Psoas muscle (tissue), 8 donors: ENCODE measurements at regions of chr5 and their contacts with region 1.

Region 1: DNA sequence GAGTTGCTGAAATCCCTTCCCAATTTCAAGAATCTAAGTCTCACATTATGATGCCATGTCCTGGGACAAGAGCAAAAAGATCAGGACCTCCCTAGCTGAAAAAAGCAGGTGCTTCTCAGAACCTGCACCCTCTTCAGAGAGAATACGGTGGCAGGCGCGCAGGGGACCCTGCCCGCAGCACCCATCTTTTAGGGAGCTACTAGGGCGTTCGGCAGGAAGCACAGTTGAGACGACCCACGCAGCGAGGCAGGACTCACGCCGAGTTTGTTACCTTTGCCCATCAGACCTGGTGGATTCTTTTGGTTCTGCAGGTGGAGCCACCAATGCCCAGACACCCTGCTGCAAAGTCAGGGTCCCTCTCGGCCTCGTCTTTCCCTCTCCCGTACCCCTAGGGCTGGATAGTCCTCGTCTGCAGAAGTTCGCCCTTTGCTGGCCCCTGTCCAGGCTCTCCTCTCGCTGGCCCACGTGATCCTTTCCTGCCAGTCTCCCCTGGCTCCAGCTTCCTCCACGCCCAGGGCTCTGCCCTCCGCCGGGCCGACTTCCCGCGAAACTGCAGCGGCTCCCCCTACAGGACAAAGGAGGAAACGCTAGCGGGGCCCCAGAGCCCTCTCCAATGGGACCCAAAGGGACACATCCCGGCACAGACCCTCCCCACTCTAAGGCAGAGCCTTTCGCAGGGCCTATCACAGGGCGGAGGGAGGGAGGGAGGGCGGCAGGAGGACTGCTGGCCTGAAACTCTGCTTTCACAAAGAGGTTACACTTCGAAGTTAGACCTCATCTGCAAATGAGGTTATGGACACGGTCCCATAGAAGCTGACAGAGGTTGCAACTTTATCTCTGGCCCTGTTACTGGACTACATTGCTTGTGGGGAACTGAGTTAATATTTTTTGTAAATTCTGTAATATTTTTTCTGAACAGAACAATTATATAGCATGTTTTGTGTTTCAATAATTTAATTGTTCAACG is 28.8 kb downstream of the TMEM174 start:
- DNase-seq: peak; percentile 69 to 80
- ATAC-seq: peak; percentile 78 to 90 (median 84)
- H3K4me3 ChIP-seq: no peak overlapping the region
- H3K27ac ChIP-seq: no peak overlapping the region
- H3K4me1 ChIP-seq: no peaks in the 10 kb centered on the region
- H3K27me3 ChIP-seq: peaks cover 0 to 21% (median 0%) of the 10 kb centered on the region in 3 donors
- CTCF ChIP-seq: peak; percentile 60

Region 2: GRCh38 chr5:73031839-73032238 is 170.0 kb before region 1 on chr5:
- intact Hi-C with region 1: no loop called
- DNase-seq: peak; percentile 34 to 65
- ATAC-seq: peak in 2 of 4 donors; percentile 59 to 76
- H3K4me3 ChIP-seq: no peak overlapping the region
- H3K27ac ChIP-seq: no peak overlapping the region
- H3K4me1 ChIP-seq: peaks cover 4% of the 10 kb centered on the region
- H3K27me3 ChIP-seq: no peaks in the 10 kb centered on the region
- CTCF ChIP-seq: no peak

Region 3: DNA sequence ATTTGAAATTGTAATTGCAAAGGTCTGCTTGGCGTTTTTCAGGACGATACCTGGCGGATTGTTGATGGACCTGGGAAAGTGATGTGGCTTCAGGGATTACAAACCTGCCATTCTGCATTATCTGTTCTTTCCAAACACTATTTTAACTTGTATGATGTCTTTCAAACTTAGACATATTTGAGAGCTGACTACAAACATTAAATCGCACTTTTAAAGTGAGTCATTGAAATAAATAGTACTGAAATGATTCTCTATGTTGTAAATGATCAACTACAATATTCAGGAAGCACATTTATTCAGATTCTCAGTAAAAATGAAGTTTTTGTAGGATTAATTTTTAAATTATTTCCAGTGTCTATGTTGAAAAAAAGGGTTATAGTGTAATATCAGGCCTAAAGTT is 113.8 kb before region 1 on chr5:
- intact Hi-C with region 1: loop called in 1 of 2 experiments (anchors 2 kb)
- DNase-seq: no peak
- ATAC-seq: no peak
- H3K4me3 ChIP-seq: no peak overlapping the region
- H3K27ac ChIP-seq: no peak overlapping the region
- H3K4me1 ChIP-seq: no peaks in the 10 kb centered on the region
- H3K27me3 ChIP-seq: no peaks in the 10 kb centered on the region
- CTCF ChIP-seq: no peak

Region 4: DNA sequence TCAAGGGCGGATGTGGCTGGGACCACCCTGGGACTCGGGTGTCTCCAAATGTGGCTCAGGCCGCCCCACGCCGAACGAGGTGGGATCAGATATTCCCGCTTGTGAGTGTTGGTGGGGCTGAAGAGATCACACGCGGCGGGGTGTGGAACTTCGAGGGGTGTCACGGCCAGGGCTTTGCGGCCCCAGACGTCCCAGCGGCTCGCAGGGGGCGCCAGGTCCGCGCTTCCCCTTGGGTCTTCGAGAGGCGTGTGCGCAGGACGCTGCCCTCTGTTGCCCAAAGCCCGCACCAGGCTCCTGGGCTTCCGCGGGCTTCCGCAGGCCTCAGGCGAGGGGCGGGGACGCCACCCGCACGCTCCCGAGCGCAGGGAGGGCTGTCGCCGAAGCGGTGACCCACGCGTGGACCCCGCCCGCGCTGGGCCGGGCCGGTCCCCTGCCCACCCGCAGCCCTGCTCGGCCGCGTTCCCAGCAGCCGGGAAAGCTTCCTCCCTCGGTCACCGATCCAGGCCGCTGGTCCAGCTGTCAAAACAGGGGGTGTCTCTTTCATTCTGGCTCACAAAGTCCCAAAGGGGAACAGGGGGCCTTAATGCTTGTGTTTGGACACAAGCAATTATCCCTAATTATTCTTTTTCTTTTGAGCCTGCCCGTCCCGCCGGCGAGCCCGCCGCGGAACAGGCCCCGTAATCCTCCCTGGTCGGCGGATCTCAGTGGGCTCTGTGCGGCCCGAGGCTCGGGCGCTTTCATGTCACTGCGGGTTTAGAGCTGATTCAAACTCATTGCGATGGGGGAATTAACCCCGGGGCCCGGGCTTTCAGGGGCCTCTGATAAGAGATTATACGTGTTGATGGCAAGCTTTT is 31.7 kb after region 1 on chr5:
- intact Hi-C with region 1: no loop called
- DNase-seq: peak; percentile 21 to 51
- ATAC-seq: peak; percentile 48 to 81 (median 70)
- H3K4me3 ChIP-seq: peak overlapping the region; percentile 67
- H3K27ac ChIP-seq: no peak overlapping the region
- H3K4me1 ChIP-seq: peaks cover 4% of the 10 kb centered on the region
- H3K27me3 ChIP-seq: peaks cover 3 to 77% (median 10%) of the 10 kb centered on the region in 3 donors
- CTCF ChIP-seq: no peak